Activated CD4-positive, alpha-beta memory T cell treated with anti-CD3 and anti-CD28 coated beads for 36 hours (primary cell): ENCODE measurements at regions of chr11 and their contacts with region 1.

Region 1: GRCh38 chr11:19951558-19952115 is 208.6 kb downstream of the DBX1 start:
- DNase-seq: no peak
- H3K4me3 Mint-ChIP-seq: peak overlapping the region; percentile 24
- H3K27ac Mint-ChIP-seq: no peak overlapping the region
- H3K4me1 Mint-ChIP-seq: peaks cover 13% of the 10 kb centered on the region
- H3K27me3 Mint-ChIP-seq: peaks cover 12% of the 10 kb centered on the region

Region 2: DNA sequence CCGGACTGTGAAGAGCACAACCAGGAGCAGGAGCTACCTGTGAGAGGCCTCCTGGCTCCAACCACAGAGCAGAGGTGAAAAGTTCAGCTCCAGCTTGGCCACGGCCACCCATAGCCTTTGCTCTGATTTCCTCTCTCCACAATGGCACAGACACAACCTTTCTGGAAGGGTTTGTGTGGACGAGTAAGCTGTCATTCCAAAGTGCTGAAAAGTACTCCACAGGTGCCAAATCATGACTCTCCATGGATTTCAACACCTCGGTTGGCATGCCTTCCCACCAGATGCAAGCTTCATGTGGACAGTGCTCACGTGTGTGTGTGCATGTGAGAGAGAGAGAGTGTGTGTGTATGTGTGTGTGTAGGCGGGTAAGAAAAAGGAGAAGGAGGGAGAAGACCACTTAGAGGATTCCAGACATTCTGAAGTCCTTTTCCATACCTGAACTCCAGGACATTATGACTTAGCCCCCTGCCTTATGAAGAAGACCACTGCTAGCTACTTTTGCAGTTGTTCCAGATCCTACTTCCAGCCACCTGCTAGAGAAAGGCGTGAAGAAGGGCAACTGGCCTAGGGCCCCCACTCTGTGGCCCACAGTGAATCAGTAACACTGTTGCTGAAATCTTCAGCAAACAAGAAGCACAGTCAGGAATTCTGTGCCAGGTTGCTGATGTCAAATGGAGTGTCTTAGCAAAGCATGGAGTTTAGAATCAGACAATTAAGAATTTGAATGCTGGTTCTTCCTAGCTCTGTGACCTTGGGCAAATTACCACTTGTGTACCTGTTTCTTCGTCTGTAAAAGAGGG is 252.9 kb before region 1 on chr11:
- CTCF ChIA-PET with region 1: no interaction called
- POLR2A ChIA-PET with region 1: no interaction called
- intact Hi-C with region 1: no loop called
- DNase-seq: no peak
- H3K4me3 Mint-ChIP-seq: no peak overlapping the region
- H3K27ac Mint-ChIP-seq: no peak overlapping the region
- H3K4me1 Mint-ChIP-seq: no peaks in the 10 kb centered on the region
- H3K27me3 Mint-ChIP-seq: peaks cover 9% of the 10 kb centered on the region

Region 3: GRCh38 chr11:19769820-19770219 is 181.8 kb before region 1 on chr11:
- CTCF ChIA-PET with region 1: no interaction called
- POLR2A ChIA-PET with region 1: no interaction called
- intact Hi-C with region 1: no loop called
- DNase-seq: no peak
- H3K4me3 Mint-ChIP-seq: no peak overlapping the region
- H3K27ac Mint-ChIP-seq: no peak overlapping the region
- H3K4me1 Mint-ChIP-seq: peaks cover 5% of the 10 kb centered on the region
- H3K27me3 Mint-ChIP-seq: peaks cover 8% of the 10 kb centered on the region

Region 4: GRCh38 chr11:19938169-19938856 is 13.3 kb before region 1 on chr11:
- CTCF ChIA-PET with region 1: interaction called, 19 read pairs
- POLR2A ChIA-PET with region 1: interaction called, 4 read pairs
- intact Hi-C with region 1: no loop called
- DNase-seq: peak; percentile 59
- H3K4me3 Mint-ChIP-seq: no peak overlapping the region
- H3K27ac Mint-ChIP-seq: no peak overlapping the region
- H3K4me1 Mint-ChIP-seq: no peaks in the 10 kb centered on the region
- H3K27me3 Mint-ChIP-seq: no peaks in the 10 kb centered on the region

Region 5: GRCh38 chr11:19962801-19963175 is 11.2 kb after region 1 on chr11:
- CTCF ChIA-PET with region 1: interaction called, 26 read pairs
- POLR2A ChIA-PET with region 1: no interaction called
- intact Hi-C with region 1: no loop called
- DNase-seq: no peak
- H3K4me3 Mint-ChIP-seq: no peak overlapping the region
- H3K27ac Mint-ChIP-seq: no peak overlapping the region
- H3K4me1 Mint-ChIP-seq: peaks cover 14% of the 10 kb centered on the region
- H3K27me3 Mint-ChIP-seq: peaks cover 16% of the 10 kb centered on the region

Region 6: GRCh38 chr11:20110908-20111669 is 159.5 kb after region 1 on chr11:
- CTCF ChIA-PET with region 1: interaction called, 76 read pairs
- POLR2A ChIA-PET with region 1: no interaction called
- intact Hi-C with region 1: loop called (anchors 1 kb)
- DNase-seq: peak; percentile 65
- H3K4me3 Mint-ChIP-seq: no peak overlapping the region
- H3K27ac Mint-ChIP-seq: no peak overlapping the region
- H3K4me1 Mint-ChIP-seq: no peaks in the 10 kb centered on the region
- H3K27me3 Mint-ChIP-seq: peaks cover 2% of the 10 kb centered on the region

Region 7: GRCh38 chr11:20355221-20356219 is 403.9 kb after region 1 on chr11:
- CTCF ChIA-PET with region 1: interaction called, 3 read pairs
- POLR2A ChIA-PET with region 1: no interaction called
- intact Hi-C with region 1: loop called (anchors 10 kb)
- DNase-seq: peak; percentile 58
- H3K4me3 Mint-ChIP-seq: no peak overlapping the region
- H3K27ac Mint-ChIP-seq: no peak overlapping the region
- H3K4me1 Mint-ChIP-seq: peaks cover 10% of the 10 kb centered on the region
- H3K27me3 Mint-ChIP-seq: no peaks in the 10 kb centered on the region